MCF 10A (cell line): ENCODE measurements at regions of chr3 and their contacts with region 1.

Region 1: GRCh38 chr3:64023187-64023848 is at the start of gene PSMD6:
- DNase-seq: peak; percentile 81
- H3K4me3 Mint-ChIP-seq: peak within 1 kb of the TSS; percentile 80
- H3K27ac Mint-ChIP-seq: peak within 1 kb of the TSS; percentile 92
- H3K4me1 Mint-ChIP-seq: peaks cover 6% of the 10 kb centered on the region
- H3K27me3 Mint-ChIP-seq: peaks cover 11% of the 10 kb centered on the region
- CTCF ChIP-seq: peak; percentile 97
- total RNA-seq, gene PSMD6: 62.7 and 66.0 TPM in 2 replicates

Region 2: DNA sequence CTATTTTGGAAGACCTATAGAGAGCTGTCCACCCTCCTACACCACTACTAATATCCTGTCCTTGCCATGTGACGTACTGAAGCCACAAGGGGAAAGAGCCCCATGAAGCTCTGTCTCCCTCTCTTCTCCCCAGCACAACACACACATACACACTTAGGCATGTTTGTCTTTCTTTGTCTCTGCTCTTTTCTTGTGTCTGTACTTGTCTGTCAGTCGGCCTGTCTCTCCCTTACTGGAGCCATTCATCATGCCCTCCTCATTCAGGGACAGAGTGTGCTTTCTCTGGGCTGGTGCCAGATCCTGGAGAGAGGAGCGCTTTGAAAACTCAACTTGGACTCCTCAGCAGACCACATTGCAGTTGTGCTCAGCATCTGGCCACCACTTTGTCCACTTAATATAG is 47.6 kb before region 1 on chr3:
- CTCF ChIA-PET with region 1: interaction called, 5 read pairs
- POLR2A ChIA-PET with region 1: interaction called, 12 read pairs
- intact Hi-C with region 1: no loop called
- DNase-seq: peak; percentile 94
- H3K4me3 Mint-ChIP-seq: peak overlapping the region; percentile 45
- H3K27ac Mint-ChIP-seq: peak overlapping the region; percentile 86
- H3K4me1 Mint-ChIP-seq: peaks cover 63% of the 10 kb centered on the region
- H3K27me3 Mint-ChIP-seq: no peaks in the 10 kb centered on the region
- CTCF ChIP-seq: no peak

Region 3: GRCh38 chr3:64003589-64003988 is 19.7 kb before region 1 on chr3:
- CTCF ChIA-PET with region 1: interaction called, 54 read pairs
- POLR2A ChIA-PET with region 1: interaction called, 18 read pairs
- intact Hi-C with region 1: no loop called
- DNase-seq: no peak
- H3K4me3 Mint-ChIP-seq: no peak overlapping the region
- H3K27ac Mint-ChIP-seq: no peak overlapping the region
- H3K4me1 Mint-ChIP-seq: no peaks in the 10 kb centered on the region
- H3K27me3 Mint-ChIP-seq: no peaks in the 10 kb centered on the region
- CTCF ChIP-seq: no peak

Region 4: GRCh38 chr3:64163755-64164148 is 140.4 kb after region 1 on chr3:
- CTCF ChIA-PET with region 1: interaction called, 14 read pairs
- POLR2A ChIA-PET with region 1: no interaction called
- intact Hi-C with region 1: no loop called
- DNase-seq: peak; percentile 85
- H3K4me3 Mint-ChIP-seq: peak overlapping the region; percentile 25
- H3K27ac Mint-ChIP-seq: peak overlapping the region; percentile 87
- H3K4me1 Mint-ChIP-seq: peaks cover 48% of the 10 kb centered on the region
- H3K27me3 Mint-ChIP-seq: no peaks in the 10 kb centered on the region
- CTCF ChIP-seq: no peak

Region 5: GRCh38 chr3:64399205-64399800 is 376.0 kb after region 1 on chr3:
- CTCF ChIA-PET with region 1: interaction called, 16 read pairs
- POLR2A ChIA-PET with region 1: interaction called, 3 read pairs
- intact Hi-C with region 1: no loop called
- DNase-seq: peak; percentile 78
- H3K4me3 Mint-ChIP-seq: no peak overlapping the region
- H3K27ac Mint-ChIP-seq: no peak overlapping the region
- H3K4me1 Mint-ChIP-seq: no peaks in the 10 kb centered on the region
- H3K27me3 Mint-ChIP-seq: no peaks in the 10 kb centered on the region
- CTCF ChIP-seq: peak; percentile 83